PC-3 (cell line): ENCODE measurements at regions of chr14 and their contacts with region 1.

Region 1: GRCh38 chr14:88551094-88551870 is 3.5 kb downstream of the PTPN21 start:
- DNase-seq: peak; percentile 90
- ATAC-seq: peak; percentile 52
- H3K4me3 ChIP-seq: peak overlapping the region; percentile 82
- H3K27ac ChIP-seq: no peak overlapping the region
- H3K4me1 ChIP-seq: peaks cover 24% of the 10 kb centered on the region
- H3K27me3 ChIP-seq: no peaks in the 10 kb centered on the region
- CTCF ChIP-seq: peak; percentile 41; the same call in 1 of the 2 replicates

Region 2: GRCh38 chr14:88492272-88493089 is 58.8 kb before region 1 on chr14:
- CTCF ChIA-PET with region 1: no interaction called
- POLR2A ChIA-PET with region 1: no interaction called
- intact Hi-C with region 1: loop called (anchors 1 kb)
- DNase-seq: peak; percentile 88
- ATAC-seq: peak; percentile 88
- H3K4me3 ChIP-seq: no peak overlapping the region
- H3K27ac ChIP-seq: no peak overlapping the region
- H3K4me1 ChIP-seq: no peaks in the 10 kb centered on the region
- H3K27me3 ChIP-seq: no peaks in the 10 kb centered on the region
- CTCF ChIP-seq: peak; percentile 96

Region 3: DNA sequence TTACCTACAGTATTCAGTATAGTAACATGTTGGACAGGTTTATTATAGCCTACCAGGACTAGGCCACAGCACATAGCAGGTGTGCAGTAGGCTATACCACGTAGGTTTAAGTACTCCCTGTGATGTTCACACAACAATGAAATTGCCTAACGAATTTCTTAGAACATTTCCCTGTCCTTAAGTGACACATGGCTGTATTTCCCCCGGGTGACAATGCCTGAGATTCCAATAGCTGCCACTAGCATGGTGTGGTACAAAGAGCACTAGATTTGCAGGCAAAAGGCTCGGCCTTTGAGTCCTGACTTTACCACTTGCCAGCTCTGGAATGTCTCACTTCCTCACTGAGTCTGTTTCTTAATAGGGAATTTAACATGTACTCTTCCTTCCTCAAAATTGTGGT is 16.1 kb before region 1 on chr14:
- CTCF ChIA-PET with region 1: no interaction called
- POLR2A ChIA-PET with region 1: no interaction called
- intact Hi-C with region 1: no loop called
- DNase-seq: no peak
- ATAC-seq: peak; percentile 43; the same call in 1 of the 2 replicates
- H3K4me3 ChIP-seq: no peak overlapping the region
- H3K27ac ChIP-seq: no peak overlapping the region
- H3K4me1 ChIP-seq: no peaks in the 10 kb centered on the region
- H3K27me3 ChIP-seq: no peaks in the 10 kb centered on the region
- CTCF ChIP-seq: no peak